Uterus (tissue), 4 donors: ENCODE measurements at regions of chr15 and their contacts with region 1.

Region 1: DNA sequence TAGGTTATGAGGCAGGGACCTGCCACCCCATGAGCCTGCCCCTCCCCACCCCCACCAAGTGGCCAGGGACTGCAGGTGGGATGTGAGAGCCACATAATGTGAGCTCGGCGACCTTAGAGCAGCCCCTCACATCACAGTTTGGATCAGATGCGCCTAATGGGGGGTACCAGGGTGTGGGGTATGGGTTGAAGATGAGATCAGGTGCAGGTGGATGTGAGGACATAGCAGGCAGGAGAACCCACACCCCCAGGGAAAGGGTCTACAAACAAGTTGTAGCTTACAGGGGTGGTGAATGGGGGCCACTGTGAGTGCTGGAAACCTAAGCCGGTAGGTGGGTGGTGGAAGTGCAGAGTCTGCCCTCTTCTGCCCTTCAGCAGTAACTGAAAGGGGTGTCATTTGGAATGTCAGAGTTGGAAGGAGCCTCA is 94.0 kb downstream of the CORO2B start:
- DNase-seq: peak in 1 of 2 donors; percentile 12
- H3K4me3 ChIP-seq: no peak overlapping the region
- H3K27ac ChIP-seq: no peak overlapping the region
- H3K4me1 ChIP-seq: no peaks in the 10 kb centered on the region
- H3K27me3 ChIP-seq: no peaks in the 10 kb centered on the region
- CTCF ChIP-seq: peak in 2 of 4 experiments; percentile 10 to 15
- POLR2A ChIP-seq: no peak

Region 2: GRCh38 chr15:68316061-68316804 is 356.6 kb before region 1 on chr15:
- intact Hi-C with region 1: loop called (anchors 10 kb)
- DNase-seq: peak; percentile 35 to 43
- H3K4me3 ChIP-seq: no peak overlapping the region
- H3K27ac ChIP-seq: peak overlapping the region; percentile 44 to 75
- H3K4me1 ChIP-seq: peaks cover 0 to 3% of the 10 kb centered on the region in 2 donors
- H3K27me3 ChIP-seq: no peaks in the 10 kb centered on the region
- CTCF ChIP-seq: peak in 1 of 4 experiments; percentile 12
- POLR2A ChIP-seq: no peak

Region 3: DNA sequence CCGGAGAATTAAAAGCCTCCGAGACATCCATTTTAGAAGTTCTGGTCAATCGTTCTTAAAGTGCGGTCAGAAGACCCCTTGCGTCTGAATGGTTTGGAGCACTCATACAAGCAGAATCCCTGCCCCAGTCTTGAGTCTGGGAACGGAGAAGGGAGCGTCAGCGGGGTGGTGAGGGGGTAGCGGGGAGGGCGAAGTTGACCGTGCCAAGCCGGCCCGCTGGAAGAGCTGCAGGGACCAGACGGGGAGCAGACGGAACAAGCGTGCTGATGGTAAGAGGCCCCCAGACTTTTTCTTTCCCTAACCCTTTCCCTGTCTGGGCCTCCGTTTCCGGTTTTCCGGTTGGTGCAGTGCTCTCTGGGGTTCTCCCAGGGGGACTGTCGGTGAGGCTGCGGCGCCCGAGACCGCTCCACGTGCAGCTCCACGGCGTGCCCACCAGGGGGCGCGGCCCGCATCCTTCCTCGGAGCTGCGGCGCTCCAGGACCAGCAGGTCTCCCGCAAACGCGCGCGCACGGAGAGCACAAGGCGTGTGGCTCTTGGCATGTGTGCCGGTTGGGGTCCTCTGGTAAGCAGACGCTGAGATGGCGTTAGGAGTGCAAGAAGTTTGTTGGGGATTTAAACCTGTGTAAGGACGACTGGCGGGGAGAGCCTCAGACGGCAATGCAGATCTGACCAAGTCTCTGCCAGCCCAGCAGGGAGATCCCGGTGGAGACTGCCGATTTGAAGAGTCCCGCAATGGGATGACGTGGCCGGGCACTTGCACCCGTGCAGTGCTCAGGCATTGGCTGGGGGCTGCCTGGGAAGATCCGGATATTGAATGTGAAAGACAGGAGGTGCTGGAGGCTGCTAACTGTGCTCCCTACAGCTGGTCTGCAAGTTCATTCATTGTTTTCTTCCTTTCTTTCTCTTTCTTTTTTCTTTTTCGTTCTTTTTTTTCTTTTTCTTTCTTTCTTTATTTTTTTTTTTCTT is 113.2 kb before region 1 on chr15:
- intact Hi-C with region 1: loop called (anchors 5 kb)
- DNase-seq: peak; percentile 77 to 87
- H3K4me3 ChIP-seq: peak overlapping the region; percentile 32 to 38
- H3K27ac ChIP-seq: peak overlapping the region; percentile 60 to 75
- H3K4me1 ChIP-seq: no peaks in the 10 kb centered on the region
- H3K27me3 ChIP-seq: no peaks in the 10 kb centered on the region
- CTCF ChIP-seq: peak; percentile 95 to 98 (median 97)
- POLR2A ChIP-seq: no peak

Region 4: GRCh38 chr15:68578174-68578979 is 94.4 kb before region 1 on chr15:
- intact Hi-C with region 1: loop called (anchors 5 kb)
- DNase-seq: peak; percentile 80 to 86
- H3K4me3 ChIP-seq: peak overlapping the region; percentile 32 to 60
- H3K27ac ChIP-seq: peak overlapping the region; percentile 75 to 90
- H3K4me1 ChIP-seq: no peaks in the 10 kb centered on the region
- H3K27me3 ChIP-seq: no peaks in the 10 kb centered on the region
- CTCF ChIP-seq: peak; percentile 59 to 89 (median 74)
- POLR2A ChIP-seq: peak in 1 of 2 donors; percentile 42